ENCODE measurements at regions of chr3 and their contacts with region 1.

Region 1: GRCh38 chr3:186540221-186540834 is 3.9 kb downstream of the CRYGS start:
- DNase-seq: peak; percentile 70
- H3K4me3 Mint-ChIP-seq: no peak overlapping the region
- H3K27ac Mint-ChIP-seq: peak overlapping the region; percentile 20
- H3K4me1 Mint-ChIP-seq: peaks cover 31% of the 10 kb centered on the region
- H3K27me3 Mint-ChIP-seq: no peaks in the 10 kb centered on the region

Region 2: GRCh38 chr3:185983495-185984141 is 556.7 kb before region 1 on chr3:
- intact Hi-C with region 1: loop called (anchors 1 kb)
- DNase-seq: peak; percentile 16
- H3K4me3 Mint-ChIP-seq: no peak overlapping the region
- H3K27ac Mint-ChIP-seq: no peak overlapping the region
- H3K4me1 Mint-ChIP-seq: no peaks in the 10 kb centered on the region
- H3K27me3 Mint-ChIP-seq: peaks cover 42% of the 10 kb centered on the region

Region 3: GRCh38 chr3:186259612-186260383 is 280.5 kb before region 1 on chr3:
- intact Hi-C with region 1: loop called (anchors 1 kb)
- DNase-seq: peak; percentile 27
- H3K4me3 Mint-ChIP-seq: peak overlapping the region; percentile 3
- H3K27ac Mint-ChIP-seq: peak overlapping the region; percentile 40
- H3K4me1 Mint-ChIP-seq: peaks cover 20% of the 10 kb centered on the region
- H3K27me3 Mint-ChIP-seq: peaks cover 5% of the 10 kb centered on the region

Region 4: GRCh38 chr3:186519021-186519658 is 21.2 kb before region 1 on chr3:
- intact Hi-C with region 1: loop called (anchors 1 kb)
- DNase-seq: peak; percentile 18
- H3K4me3 Mint-ChIP-seq: no peak overlapping the region
- H3K27ac Mint-ChIP-seq: peak overlapping the region; percentile 7
- H3K4me1 Mint-ChIP-seq: peaks cover 41% of the 10 kb centered on the region
- H3K27me3 Mint-ChIP-seq: no peaks in the 10 kb centered on the region